Activated T-helper 1 cell treated with anti-CD3 and anti-CD28 coated beads, Interleukin-12 subunit alpha, Interleukin-12 subunit beta, Interleukin-2, Interleukin-4 antibody, amounts not matched to agents 30 ng/mL and 10 ng/mL and 1 ng/mL, durations not matched to agents 14 hours and 24 hours and 36 hours (primary cell): ENCODE measurements at regions of chr6 and their contacts with region 1.

Region 1: DNA sequence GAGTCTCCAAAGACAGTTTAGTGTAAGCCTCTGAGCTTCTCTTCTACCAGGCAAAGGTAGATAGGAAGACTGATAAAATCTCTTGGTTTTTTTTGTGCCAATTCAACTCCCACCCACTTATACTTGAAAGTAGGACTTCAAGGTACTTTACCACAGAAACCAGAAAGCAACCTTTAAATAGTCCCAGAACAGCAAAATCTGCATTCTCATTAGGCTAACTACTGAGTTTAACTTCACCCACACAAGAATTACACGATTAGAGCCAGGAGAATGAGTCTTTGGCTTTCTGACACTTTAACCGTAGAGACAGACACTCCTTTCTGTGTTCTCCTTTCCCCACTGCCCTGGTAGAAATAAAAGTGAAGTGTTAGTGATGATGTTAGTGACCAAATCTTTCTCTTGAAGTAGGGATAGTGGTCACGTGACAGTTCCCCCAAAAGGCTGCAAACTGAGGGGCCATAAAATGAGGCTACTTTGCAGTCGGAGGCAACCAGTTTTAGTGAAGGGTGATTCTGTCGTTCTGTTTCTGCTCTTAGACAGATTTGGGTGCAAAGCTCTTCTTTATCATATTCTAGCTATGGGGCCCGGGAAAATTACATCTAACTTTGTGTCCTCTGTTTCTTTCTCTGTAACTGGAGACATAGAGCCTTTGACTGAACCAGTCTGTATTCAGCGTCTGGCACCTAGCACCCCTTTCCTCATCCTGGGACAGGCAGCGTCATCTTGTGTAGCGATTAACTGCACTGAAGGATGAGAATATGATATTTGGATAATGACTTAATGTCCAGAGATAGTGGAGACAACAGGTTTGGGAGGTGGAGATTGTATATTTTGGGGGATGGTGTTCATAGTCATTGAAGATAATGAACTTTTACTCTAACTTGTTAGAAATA is 206.4 kb upstream of the CITED2 start:
- DNase-seq: no peak
- H3K4me3 Mint-ChIP-seq: no peak overlapping the region
- H3K27ac Mint-ChIP-seq: peak overlapping the region; percentile 36
- H3K4me1 Mint-ChIP-seq: peaks cover 29% of the 10 kb centered on the region
- H3K27me3 Mint-ChIP-seq: peaks cover 8% of the 10 kb centered on the region

Region 2: GRCh38 chr6:139291813-139292619 is 288.8 kb before region 1 on chr6 and contains the start of gene TXLNB:
- intact Hi-C with region 1: no loop called
- DNase-seq: peak; percentile 80
- H3K4me3 Mint-ChIP-seq: peak within 1 kb of the TSS; percentile 73
- H3K27ac Mint-ChIP-seq: peak within 1 kb of the TSS; percentile 98
- H3K4me1 Mint-ChIP-seq: peaks cover 84% of the 10 kb centered on the region
- H3K27me3 Mint-ChIP-seq: peaks cover 2% of the 10 kb centered on the region
- total RNA-seq, gene TXLNB: 0.08 TPM in 1 of 2 replicates, not detected in the other

Region 3: GRCh38 chr6:139540276-139540675 is 40.6 kb before region 1 on chr6:
- intact Hi-C with region 1: loop called (anchors 2 kb)
- DNase-seq: peak; percentile 56
- H3K4me3 Mint-ChIP-seq: peak overlapping the region; percentile 38
- H3K27ac Mint-ChIP-seq: peak overlapping the region; percentile 73
- H3K4me1 Mint-ChIP-seq: peaks cover 66% of the 10 kb centered on the region
- H3K27me3 Mint-ChIP-seq: no peaks in the 10 kb centered on the region